ENCODE measurements at regions of chr9 and their contacts with region 1.

Region 1: GRCh38 chr9:109320742-109321448 is at the start of gene EPB41L4B:
- DNase-seq: peak; percentile 81 to 89 (median 84)
- ATAC-seq: peak; percentile 73 to 87 (median 86)
- H3K4me3 ChIP-seq: peak within 1 kb of the TSS; percentile 29 to 65 (median 50)
- H3K27ac ChIP-seq: peak within 1 kb of the TSS in 5 of 12 donors; percentile 1 to 57 (median 48)
- H3K4me1 ChIP-seq: peaks cover 0 to 26% (median 10%) of the 10 kb centered on the region in 12 donors
- H3K27me3 ChIP-seq: peaks cover 0 to 51% (median 17%) of the 10 kb centered on the region in 9 donors
- CTCF ChIP-seq: peak; percentile 78 to 95 (median 87)
- POLR2A ChIP-seq: no peak
- total RNA-seq, gene EPB41L4B: 3.8 to 16.5 (median 10.1) TPM

Region 2: GRCh38 chr9:108885643-108886348 is 435.1 kb before region 1 on chr9:
- intact Hi-C with region 1: loop called in 5 of 10 experiments (anchors 2 to 10 kb)
- DNase-seq: peak in 1 of 5 donors; percentile 26
- ATAC-seq: peak in 3 of 4 donors; percentile 47 to 76 (median 67)
- H3K4me3 ChIP-seq: no peak overlapping the region
- H3K27ac ChIP-seq: no peak overlapping the region
- H3K4me1 ChIP-seq: peaks cover 0 to 23% (median 2%) of the 10 kb centered on the region in 12 donors
- H3K27me3 ChIP-seq: no peaks in the 10 kb centered on the region
- CTCF ChIP-seq: no peak
- POLR2A ChIP-seq: no peak

Region 3: GRCh38 chr9:109092051-109092580 is 228.8 kb before region 1 on chr9:
- intact Hi-C with region 1: loop called in 1 of 10 experiments (anchors 5 kb)
- DNase-seq: no peak
- ATAC-seq: no peak
- H3K4me3 ChIP-seq: no peak overlapping the region
- H3K27ac ChIP-seq: peak overlapping the region in 6 of 12 donors; percentile 2 to 31 (median 17)
- H3K4me1 ChIP-seq: peaks cover 0 to 48% (median 21%) of the 10 kb centered on the region in 12 donors
- H3K27me3 ChIP-seq: no peaks in the 10 kb centered on the region
- CTCF ChIP-seq: no peak
- POLR2A ChIP-seq: no peak

Region 4: DNA sequence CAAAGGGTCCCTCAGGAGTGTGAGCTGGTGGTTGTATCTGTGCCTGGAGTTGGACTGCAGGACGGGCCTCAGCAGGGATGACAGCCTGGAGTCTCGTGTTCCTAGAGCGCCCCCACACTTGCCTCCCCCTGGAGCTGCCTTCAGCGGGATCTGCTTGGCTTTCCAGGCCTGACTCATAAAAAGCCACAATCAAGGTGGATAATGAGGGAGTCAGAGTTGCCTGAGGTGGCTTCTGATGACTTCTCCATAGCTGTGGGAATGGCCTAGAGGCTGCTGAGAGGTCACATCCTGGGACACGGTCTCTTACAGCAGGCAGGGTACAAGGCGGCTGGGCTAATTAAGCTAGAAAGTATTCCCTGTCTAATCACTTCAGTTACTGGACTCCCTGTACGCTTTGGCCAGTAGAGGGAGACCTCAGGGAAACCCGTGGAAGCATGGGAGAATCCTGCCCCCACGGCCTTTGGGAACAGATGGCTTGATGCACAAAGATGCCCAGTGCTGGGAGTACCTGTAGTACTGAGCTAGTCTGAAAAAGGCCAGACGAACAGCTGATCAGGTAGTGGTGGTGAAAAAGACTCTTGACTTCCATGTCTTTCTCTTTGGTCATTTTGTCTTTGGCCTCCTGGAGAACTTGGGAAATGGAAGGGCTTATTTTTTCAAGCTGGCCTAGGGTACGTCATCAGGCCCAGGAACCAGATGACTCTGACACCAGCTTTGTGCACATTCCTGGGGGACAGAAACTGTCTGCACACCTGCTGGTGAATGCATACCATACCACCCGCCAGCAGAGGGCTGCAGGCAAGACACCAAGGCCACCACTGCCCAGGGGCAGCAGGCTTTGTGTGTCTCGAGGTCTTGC is 137.7 kb before region 1 on chr9:
- intact Hi-C with region 1: loop called in 3 of 10 experiments (anchors 2 to 5 kb)
- DNase-seq: peak in 1 of 5 donors; percentile 33
- ATAC-seq: peak; percentile 22 to 38 (median 28)
- H3K4me3 ChIP-seq: no peak overlapping the region
- H3K27ac ChIP-seq: no peak overlapping the region
- H3K4me1 ChIP-seq: peaks cover 0 to 11% (median 0%) of the 10 kb centered on the region in 12 donors
- H3K27me3 ChIP-seq: no peaks in the 10 kb centered on the region
- CTCF ChIP-seq: peak in 9 of 12 donors; percentile 10 to 38 (median 19)
- POLR2A ChIP-seq: no peak

Region 5: DNA sequence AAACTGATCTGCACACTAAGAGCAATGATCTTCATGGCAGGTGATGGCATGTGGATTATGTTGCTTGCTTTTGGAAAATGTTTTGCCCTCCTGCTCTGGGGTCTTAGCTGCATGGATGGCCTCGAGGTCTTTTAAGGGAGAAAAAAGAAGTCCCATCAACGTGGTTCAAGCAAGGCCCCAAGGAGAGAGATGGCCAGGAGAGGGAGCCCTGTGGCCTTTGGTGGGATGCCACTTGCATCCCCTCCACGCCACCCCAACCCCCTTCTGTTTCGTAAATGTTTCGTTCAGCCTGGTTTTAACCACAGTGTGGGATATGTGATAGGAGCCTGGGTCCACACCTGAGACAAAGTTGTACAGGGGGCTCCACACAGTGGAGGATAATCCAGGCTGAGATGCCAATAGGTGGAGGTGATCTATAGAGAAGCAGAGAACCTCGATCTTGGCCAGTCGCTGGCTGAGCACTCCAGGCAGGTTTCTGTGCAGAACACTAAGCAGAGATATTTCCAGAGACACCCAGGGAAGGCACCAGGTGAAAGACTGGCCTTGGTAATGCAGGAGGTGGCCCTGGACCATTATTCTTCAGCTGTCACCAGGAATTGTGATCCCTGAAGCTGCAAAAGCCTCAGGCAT is 128.0 kb before region 1 on chr9:
- intact Hi-C with region 1: loop called in 7 of 10 experiments (anchors 2 to 10 kb)
- DNase-seq: no peak
- ATAC-seq: peak in 3 of 4 donors; percentile 38 to 65 (median 58)
- H3K4me3 ChIP-seq: no peak overlapping the region
- H3K27ac ChIP-seq: no peak overlapping the region
- H3K4me1 ChIP-seq: no peaks in the 10 kb centered on the region
- H3K27me3 ChIP-seq: no peaks in the 10 kb centered on the region
- CTCF ChIP-seq: peak in 10 of 12 donors; percentile 16 to 49 (median 32)
- POLR2A ChIP-seq: no peak

Region 6: DNA sequence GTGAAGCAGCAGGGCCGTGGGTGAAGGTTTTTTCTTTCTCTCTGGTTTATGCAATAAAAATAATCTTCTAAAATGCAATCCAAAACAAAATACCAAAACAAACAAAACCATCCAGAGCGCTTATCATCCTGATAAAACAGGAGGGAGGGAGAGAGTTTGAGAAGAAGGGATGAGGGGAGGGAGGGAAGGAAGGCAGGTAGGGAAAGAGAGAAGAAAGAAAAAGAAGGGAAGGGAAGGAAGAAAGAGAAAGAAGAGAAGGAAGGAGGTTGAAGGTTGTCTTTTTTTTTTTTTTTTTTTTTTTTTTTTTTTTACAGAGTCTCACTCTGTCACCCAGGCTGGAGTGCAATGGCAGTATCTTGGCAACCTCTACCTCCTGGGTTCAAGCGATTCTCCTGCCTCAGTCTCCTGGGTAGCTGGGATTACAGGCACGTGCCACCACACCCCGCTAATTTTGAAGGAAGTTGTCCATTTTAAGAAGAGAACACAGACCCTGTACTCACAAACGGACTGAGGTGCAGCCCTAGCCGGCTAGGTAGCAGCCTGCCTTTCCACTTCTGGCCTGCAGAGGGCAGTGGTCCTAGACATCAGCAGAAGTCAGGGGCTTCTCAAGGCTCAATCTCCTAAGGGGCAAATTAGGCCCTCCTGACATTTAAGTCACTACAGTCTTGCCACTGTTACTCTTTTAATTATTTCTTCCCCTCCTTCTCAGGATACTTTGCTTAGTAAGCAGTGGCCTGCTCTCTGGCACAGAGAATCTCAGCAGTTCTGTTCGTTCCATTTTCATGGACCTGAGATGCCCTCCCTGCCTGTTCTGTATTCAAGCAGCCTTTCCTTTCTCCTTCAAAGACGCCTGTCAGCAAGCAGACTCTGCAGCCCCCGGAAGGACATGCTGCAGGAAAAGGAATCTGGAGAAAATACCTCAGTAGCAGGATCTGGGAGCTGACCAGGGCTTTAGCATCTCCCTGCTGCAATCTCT is 76.5 kb before region 1 on chr9:
- intact Hi-C with region 1: loop called (anchors 1 to 5 kb)
- DNase-seq: peak; percentile 42 to 79 (median 58)
- ATAC-seq: peak; percentile 68 to 89 (median 82)
- H3K4me3 ChIP-seq: no peak overlapping the region
- H3K27ac ChIP-seq: peak overlapping the region in 1 of 12 donors; percentile 53
- H3K4me1 ChIP-seq: peaks cover 0 to 17% (median 2%) of the 10 kb centered on the region in 12 donors
- H3K27me3 ChIP-seq: peaks cover 0 to 6% (median 0%) of the 10 kb centered on the region in 9 donors
- CTCF ChIP-seq: peak; percentile 89 to 95 (median 93)
- POLR2A ChIP-seq: no peak

Region 7: DNA sequence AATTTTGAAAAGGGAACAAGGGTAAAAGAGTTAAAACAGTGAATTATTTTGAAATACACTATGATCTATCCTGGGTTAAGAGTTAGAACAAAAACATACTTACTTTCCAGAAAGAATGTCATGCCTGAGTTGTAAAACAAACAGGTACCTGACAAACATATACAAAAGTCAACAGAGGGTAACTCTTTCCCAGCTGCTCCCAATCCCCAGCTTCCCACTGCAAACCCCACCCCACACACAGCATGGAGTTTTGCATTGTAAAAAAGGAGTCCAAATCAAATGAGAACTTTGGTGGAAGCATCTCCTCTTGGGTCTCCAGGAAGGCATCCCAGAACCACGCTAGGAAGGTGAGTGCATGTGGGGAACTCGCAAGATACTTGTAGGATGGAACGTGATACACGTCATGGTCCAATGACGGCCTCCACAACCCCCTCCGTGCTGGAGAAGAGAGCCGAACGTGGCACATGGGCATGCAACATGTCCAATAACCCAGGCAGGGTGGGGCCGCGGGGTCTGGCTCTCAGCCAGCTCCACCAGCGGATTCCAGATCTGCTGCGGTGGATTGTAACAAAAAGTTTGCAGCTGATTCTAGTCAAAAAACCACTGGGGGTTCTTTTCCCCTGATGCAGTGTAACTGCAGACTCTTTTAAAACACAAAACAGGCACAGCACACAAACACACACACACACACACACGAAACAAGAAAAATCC is 55.9 kb before region 1 on chr9:
- intact Hi-C with region 1: loop called in 1 of 10 experiments (anchors 5 kb)
- DNase-seq: peak; percentile 37 to 76 (median 67)
- ATAC-seq: peak in 3 of 4 donors; percentile 83 to 86 (median 84)
- H3K4me3 ChIP-seq: peak overlapping the region in 2 of 12 donors; percentile 3 to 8
- H3K27ac ChIP-seq: no peak overlapping the region
- H3K4me1 ChIP-seq: peaks cover 0 to 13% (median 0%) of the 10 kb centered on the region in 12 donors
- H3K27me3 ChIP-seq: peaks cover 0 to 9% (median 0%) of the 10 kb centered on the region in 9 donors
- CTCF ChIP-seq: no peak
- POLR2A ChIP-seq: no peak

Measured in heart left ventricle (tissue), 16 donors.